RWPE1 (cell line): ENCODE measurements at regions of chr4 and their contacts with region 1.

Region 1: DNA sequence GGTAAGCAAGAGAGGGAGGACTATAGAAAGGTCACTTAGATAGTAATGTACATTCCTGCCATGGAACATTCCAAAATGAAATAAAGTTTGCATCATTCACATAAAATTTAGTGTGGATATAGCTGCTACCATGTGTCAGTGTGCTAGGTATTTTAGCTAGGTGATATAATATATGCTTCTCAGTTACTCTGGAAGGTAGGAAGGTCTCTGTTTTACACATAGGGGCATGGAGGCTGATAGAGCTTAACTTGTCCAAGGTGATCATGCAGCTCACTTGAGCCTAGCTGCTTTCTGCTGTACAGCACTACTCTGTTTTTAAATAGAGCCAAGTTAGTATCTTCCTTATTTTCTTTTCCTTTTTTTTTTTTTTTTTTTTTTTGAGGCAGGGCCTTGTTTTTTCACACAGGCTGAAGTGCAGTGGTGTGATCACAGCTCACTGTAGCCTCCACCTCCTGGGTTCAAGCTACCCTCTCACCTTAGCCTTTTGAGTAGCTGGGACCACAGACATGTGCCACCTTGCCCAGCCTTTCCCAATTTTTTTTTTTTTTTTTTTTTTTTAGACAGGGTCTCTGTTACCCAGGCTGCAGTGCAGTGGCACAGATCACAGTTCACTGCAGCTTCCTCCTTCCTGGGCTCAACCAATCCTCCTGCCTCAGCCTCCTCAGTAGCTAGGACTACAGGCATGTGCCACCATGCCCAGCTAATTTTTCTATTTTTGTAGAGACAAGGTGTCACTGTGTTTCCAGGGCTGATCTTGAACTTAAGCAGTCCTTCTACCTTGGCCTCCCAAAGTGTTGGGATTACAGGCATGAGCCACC is 10.4 kb downstream of the AFF1 start:
- DNase-seq: no peak
- H3K27ac ChIP-seq: no peak overlapping the region
- CTCF ChIP-seq: no peak

Region 2: GRCh38 chr4:86961605-86962295 is 16.6 kb after region 1 on chr4:
- CTCF ChIA-PET with region 1: interaction called, 7 read pairs
- POLR2A ChIA-PET with region 1: interaction called, 11 read pairs
- DNase-seq: no peak
- H3K27ac ChIP-seq: no peak overlapping the region
- CTCF ChIP-seq: no peak

Region 3: GRCh38 chr4:87003266-87003665 is 58.1 kb after region 1 on chr4:
- CTCF ChIA-PET with region 1: interaction called, 10 read pairs
- POLR2A ChIA-PET with region 1: no interaction called
- DNase-seq: no peak
- H3K27ac ChIP-seq: no peak overlapping the region
- CTCF ChIP-seq: no peak

Region 4: DNA sequence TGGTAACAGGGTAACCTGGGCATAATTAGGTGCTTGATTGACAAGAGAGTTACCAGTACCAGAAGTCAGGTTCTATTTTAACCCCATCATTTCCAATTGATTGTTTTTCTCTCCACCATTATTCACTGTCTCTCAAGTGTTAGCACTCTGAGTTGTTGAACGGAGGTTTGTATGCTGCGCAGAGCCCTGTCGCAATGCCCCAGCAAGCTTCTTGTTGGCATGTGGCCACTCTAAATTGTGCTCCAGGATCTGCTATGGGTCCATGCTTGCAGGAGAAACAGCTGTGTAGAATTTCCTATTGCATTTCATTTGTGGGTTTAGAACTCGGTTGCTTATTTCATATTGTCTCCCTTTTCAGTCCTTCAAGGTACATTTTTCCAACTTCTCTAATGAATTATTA is 177.1 kb after region 1 on chr4:
- CTCF ChIA-PET with region 1: interaction called, 11 read pairs
- POLR2A ChIA-PET with region 1: interaction called, 4 read pairs
- DNase-seq: no peak
- H3K27ac ChIP-seq: peak overlapping the region; percentile 93
- CTCF ChIP-seq: no peak